A549 (cell line): ENCODE measurements at regions of chr15 and their contacts with region 1.

Region 1: GRCh38 chr15:40274350-40275274 is 8.3 kb downstream of the ANKRD63 start:
- DNase-seq: peak; percentile 40 to 78
- ATAC-seq: peak; percentile 31 to 63; a peak in 5 of 6 replicates
- H3K4me3 ChIP-seq: no peak overlapping the region
- H3K27ac ChIP-seq: no peak overlapping the region
- H3K4me1 ChIP-seq: no peaks in the 10 kb centered on the region
- CTCF ChIP-seq: peak; percentile 100
- EP300 ChIP-seq: no peak
- POLR2A ChIP-seq: no peak
- RAD21 ChIP-seq: peak; percentile 88 to 89

Region 2: DNA sequence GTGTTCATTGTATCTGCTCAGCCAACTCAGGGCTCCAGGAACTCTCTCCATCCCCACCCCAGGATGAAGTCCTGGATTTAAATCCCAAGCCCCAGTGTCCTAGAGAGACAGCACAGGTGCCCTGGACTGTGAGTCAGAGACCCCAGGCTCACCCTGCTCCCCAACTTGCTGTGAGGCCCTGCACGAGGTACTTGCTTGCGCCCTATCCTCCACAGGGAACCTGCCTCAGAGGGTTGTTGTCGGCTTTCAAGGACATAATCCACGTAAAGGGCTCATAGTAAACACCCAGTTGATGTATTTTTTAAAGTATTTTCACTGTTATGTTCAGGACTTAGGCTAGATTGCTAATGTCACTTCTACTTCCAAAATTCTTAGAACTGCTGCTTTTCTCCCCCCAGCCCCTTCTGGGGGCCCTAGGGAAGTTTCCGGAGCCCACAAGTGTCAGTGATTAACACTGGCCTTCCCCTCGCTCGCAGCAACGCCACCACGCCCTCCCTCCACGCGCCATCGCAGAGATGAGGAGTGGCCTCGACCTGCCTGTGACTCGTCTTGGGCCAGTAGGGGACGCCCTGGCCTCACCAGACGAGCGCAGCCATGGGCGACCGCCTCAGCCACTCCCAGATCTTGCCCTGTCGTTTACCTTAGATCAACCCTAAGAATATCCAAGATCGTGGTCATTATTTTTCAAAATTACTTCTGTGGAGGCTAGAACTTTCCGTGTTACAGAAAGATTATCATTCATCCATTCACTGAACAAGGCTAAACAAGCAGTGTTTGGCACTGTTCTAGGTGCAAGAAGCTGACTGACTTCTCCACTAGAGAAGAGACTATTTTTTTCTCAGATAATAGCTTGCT is 229.7 kb before region 1 on chr15:
- CTCF ChIA-PET with region 1: interaction called, 102 read pairs
- POLR2A ChIA-PET with region 1: interaction called, 9 read pairs
- DNase-seq: peak; percentile 78 to 84
- ATAC-seq: peak; percentile 94 to 98
- H3K4me3 ChIP-seq: peak overlapping the region; percentile 29
- H3K27ac ChIP-seq: peak overlapping the region; percentile 61 to 85
- H3K4me1 ChIP-seq: peaks cover 45% of the 10 kb centered on the region
- CTCF ChIP-seq: peak; percentile 83
- EP300 ChIP-seq: no peak
- POLR2A ChIP-seq: no peak
- RAD21 ChIP-seq: peak; percentile 93 to 97

Region 3: GRCh38 chr15:40217159-40217824 is 57.3 kb before region 1 on chr15:
- CTCF ChIA-PET with region 1: interaction called, 658 read pairs
- POLR2A ChIA-PET with region 1: interaction called, 3 read pairs
- DNase-seq: peak; percentile 38 to 61
- ATAC-seq: peak; percentile 83 to 88; a peak in 5 of 6 replicates
- H3K4me3 ChIP-seq: no peak overlapping the region
- H3K27ac ChIP-seq: no peak overlapping the region
- H3K4me1 ChIP-seq: no peaks in the 10 kb centered on the region
- CTCF ChIP-seq: peak; percentile 80
- EP300 ChIP-seq: no peak
- POLR2A ChIP-seq: no peak
- RAD21 ChIP-seq: peak; percentile 79 to 80

Region 4: GRCh38 chr15:40238532-40239403 is 35.8 kb before region 1 on chr15 and contains the start of gene PAK6:
- CTCF ChIA-PET with region 1: interaction called, 144 read pairs
- POLR2A ChIA-PET with region 1: no interaction called
- DNase-seq: peak; percentile 30 to 73
- ATAC-seq: peak; percentile 83 to 92
- H3K4me3 ChIP-seq: peak within 1 kb of the TSS; percentile 46
- H3K27ac ChIP-seq: peak within 1 kb of the TSS; percentile 69 to 83
- H3K4me1 ChIP-seq: peaks cover 9% of the 10 kb centered on the region
- CTCF ChIP-seq: no peak
- EP300 ChIP-seq: no peak
- POLR2A ChIP-seq: no peak
- RAD21 ChIP-seq: no peak
- polyA plus RNA-seq, gene PAK6: 0.08 and 0.16 TPM in 2 replicates

Region 5: GRCh38 chr15:40330368-40330836 is 55.8 kb after region 1 on chr15:
- CTCF ChIA-PET with region 1: interaction called, 59 read pairs
- POLR2A ChIA-PET with region 1: no interaction called
- DNase-seq: no peak
- ATAC-seq: no peak
- H3K4me3 ChIP-seq: no peak overlapping the region
- H3K27ac ChIP-seq: no peak overlapping the region
- H3K4me1 ChIP-seq: no peaks in the 10 kb centered on the region
- CTCF ChIP-seq: no peak
- EP300 ChIP-seq: no peak
- POLR2A ChIP-seq: no peak
- RAD21 ChIP-seq: no peak

Region 6: GRCh38 chr15:40421246-40422157 is 146.9 kb after region 1 on chr15:
- CTCF ChIA-PET with region 1: interaction called, 46 read pairs
- POLR2A ChIA-PET with region 1: no interaction called
- DNase-seq: peak; percentile 55 to 63
- ATAC-seq: peak; percentile 97
- H3K4me3 ChIP-seq: no peak overlapping the region
- H3K27ac ChIP-seq: no peak overlapping the region
- H3K4me1 ChIP-seq: peaks cover 4% of the 10 kb centered on the region; the same call in 2 of the 3 replicates
- CTCF ChIP-seq: peak; percentile 68
- EP300 ChIP-seq: no peak
- POLR2A ChIP-seq: no peak
- RAD21 ChIP-seq: peak; percentile 81 to 85